PC-9 (cell line): ENCODE measurements at regions of chr1 and their contacts with region 1.

Region 1: DNA sequence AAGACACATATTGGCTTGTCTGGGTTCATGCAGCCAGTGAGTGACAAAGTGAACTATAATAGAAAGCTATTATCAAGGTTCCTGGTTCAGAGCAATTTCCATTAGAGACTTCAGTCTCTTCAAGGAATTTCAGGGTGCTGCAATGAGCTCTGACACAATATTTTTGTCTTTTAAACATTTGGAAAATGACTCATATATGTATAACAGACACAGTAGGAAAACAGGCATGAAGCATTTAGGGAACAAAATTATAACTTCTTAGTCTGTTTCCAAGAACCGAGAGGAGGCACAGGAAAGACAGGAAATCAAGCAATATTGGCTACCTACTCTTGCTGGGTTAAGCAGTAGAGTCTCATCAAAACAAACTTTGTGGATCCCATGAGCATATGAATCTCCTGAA is 170.4 kb downstream of the PTPRC start:
- DNase-seq: no peak
- H3K4me3 ChIP-seq: no peak overlapping the region
- H3K27ac ChIP-seq: no peak overlapping the region
- H3K4me1 ChIP-seq: no peaks in the 10 kb centered on the region
- H3K27me3 ChIP-seq: no peaks in the 10 kb centered on the region
- CTCF ChIP-seq: no peak

Region 2: DNA sequence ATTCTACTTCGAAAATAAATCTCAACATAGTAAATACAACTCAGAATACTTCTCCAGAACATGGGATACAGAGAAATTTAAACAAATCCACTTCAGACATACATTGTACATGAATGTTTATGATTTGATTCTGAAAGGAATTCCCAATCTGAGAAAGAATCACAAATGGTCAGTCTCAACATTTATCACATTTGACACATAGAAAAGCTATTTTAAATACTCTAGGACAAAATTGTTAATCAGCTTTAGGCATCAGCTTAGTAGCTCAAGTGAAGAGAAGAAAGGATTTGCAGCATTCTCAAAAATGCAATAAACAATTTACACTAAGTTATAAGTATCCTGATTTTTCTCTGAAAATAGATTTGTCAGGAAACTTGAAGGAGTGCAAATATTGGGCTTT is 14.4 kb after region 1 on chr1:
- CTCF ChIA-PET with region 1: no interaction called
- POLR2A ChIA-PET with region 1: interaction called, 10 read pairs
- intact Hi-C with region 1: no loop called
- DNase-seq: no peak
- H3K4me3 ChIP-seq: no peak overlapping the region
- H3K27ac ChIP-seq: no peak overlapping the region
- H3K4me1 ChIP-seq: no peaks in the 10 kb centered on the region
- H3K27me3 ChIP-seq: no peaks in the 10 kb centered on the region
- CTCF ChIP-seq: no peak